Caco-2 (cell line): ENCODE measurements at regions of chr3 and their contacts with region 1.

Region 1: GRCh38 chr3:172039436-172040077 is at the start of gene FNDC3B:
- DNase-seq: peak; percentile 94 to 95
- H3K4me3 ChIP-seq: peak within 1 kb of the TSS; percentile 74
- H3K4me3 Mint-ChIP-seq: peak within 1 kb of the TSS; percentile 95
- H3K27ac Mint-ChIP-seq: peak within 1 kb of the TSS; percentile 96
- H3K4me1 ChIP-seq: peaks cover 28% of the 10 kb centered on the region; the same call in 1 of the 2 replicates
- H3K4me1 Mint-ChIP-seq: peaks cover 8% of the 10 kb centered on the region
- H3K27me3 ChIP-seq: no peaks in the 10 kb centered on the region
- H3K27me3 Mint-ChIP-seq: no peaks in the 10 kb centered on the region
- CTCF ChIP-seq: no peak
- total RNA-seq, gene FNDC3B: 59.8 and 63.5 TPM in 2 replicates

Region 2: DNA sequence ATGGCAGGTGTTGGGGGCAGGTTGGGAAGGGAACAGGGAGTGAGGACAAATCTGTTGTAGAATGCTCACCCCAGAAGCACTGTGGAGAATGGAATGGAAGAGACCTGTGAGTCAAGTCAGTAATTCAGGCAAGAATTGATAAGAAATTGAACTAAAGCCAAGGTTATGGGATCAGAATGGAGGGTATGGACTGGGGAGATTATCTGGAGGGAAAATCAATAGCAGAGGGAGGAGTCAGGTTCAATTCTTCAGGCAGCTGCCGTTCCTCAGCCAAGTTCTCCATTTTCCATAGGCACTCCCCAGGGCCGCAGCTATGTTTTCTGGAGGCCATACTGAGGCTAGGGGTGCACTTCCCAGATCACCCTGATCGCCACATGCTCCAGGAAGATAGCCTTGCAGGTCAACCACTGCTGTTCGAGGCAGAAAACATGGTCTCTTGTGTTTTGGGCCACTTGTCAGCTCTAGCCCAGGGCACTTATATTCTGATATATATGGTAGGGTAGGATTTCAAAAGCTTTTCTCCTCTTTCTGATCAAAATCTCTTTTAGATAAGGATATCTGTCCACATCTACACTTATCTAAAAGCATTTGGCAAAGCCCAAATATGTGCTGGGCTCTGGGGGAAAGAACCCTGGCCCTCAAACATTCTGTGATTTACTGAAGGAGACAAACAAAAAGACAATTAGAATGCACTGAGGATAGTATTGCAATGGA is 104.1 kb before region 1 on chr3:
- CTCF ChIA-PET with region 1: interaction called, 4 read pairs
- POLR2A ChIA-PET with region 1: interaction called, 4 read pairs
- intact Hi-C with region 1: loop called (anchors 1 kb)
- DNase-seq: peak in 1 of 2 experiments; percentile 30
- H3K4me3 ChIP-seq: no peak overlapping the region
- H3K4me3 Mint-ChIP-seq: peak overlapping the region; percentile 18
- H3K27ac Mint-ChIP-seq: no peak overlapping the region
- H3K4me1 ChIP-seq: peaks cover 14% of the 10 kb centered on the region
- H3K4me1 Mint-ChIP-seq: peaks cover 20% of the 10 kb centered on the region
- H3K27me3 ChIP-seq: no peaks in the 10 kb centered on the region
- H3K27me3 Mint-ChIP-seq: no peaks in the 10 kb centered on the region
- CTCF ChIP-seq: no peak

Region 3: DNA sequence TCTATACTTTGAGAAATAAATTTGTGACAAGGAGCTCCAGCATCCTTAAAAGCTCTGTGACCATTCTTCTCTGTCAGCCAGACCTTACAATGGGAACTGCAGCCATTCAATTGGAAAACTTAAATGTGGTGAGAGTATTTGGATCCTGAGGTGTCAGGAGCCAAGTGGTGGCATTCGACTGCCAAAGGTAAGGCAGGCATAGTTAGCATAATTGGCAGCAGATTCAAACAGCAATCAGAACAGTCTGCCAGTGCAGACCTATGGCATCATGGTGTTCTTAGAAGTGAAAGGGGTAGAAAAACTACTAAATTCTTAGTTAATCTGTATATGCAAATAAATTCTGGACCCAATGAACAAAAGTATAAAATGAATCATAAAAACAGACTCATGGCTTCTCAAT is 18.4 kb before region 1 on chr3:
- CTCF ChIA-PET with region 1: no interaction called
- POLR2A ChIA-PET with region 1: no interaction called
- intact Hi-C with region 1: no loop called
- DNase-seq: no peak
- H3K4me3 ChIP-seq: no peak overlapping the region
- H3K4me3 Mint-ChIP-seq: no peak overlapping the region
- H3K27ac Mint-ChIP-seq: no peak overlapping the region
- H3K4me1 ChIP-seq: no peaks in the 10 kb centered on the region
- H3K4me1 Mint-ChIP-seq: no peaks in the 10 kb centered on the region
- H3K27me3 ChIP-seq: no peaks in the 10 kb centered on the region
- H3K27me3 Mint-ChIP-seq: no peaks in the 10 kb centered on the region
- CTCF ChIP-seq: no peak

Region 4: DNA sequence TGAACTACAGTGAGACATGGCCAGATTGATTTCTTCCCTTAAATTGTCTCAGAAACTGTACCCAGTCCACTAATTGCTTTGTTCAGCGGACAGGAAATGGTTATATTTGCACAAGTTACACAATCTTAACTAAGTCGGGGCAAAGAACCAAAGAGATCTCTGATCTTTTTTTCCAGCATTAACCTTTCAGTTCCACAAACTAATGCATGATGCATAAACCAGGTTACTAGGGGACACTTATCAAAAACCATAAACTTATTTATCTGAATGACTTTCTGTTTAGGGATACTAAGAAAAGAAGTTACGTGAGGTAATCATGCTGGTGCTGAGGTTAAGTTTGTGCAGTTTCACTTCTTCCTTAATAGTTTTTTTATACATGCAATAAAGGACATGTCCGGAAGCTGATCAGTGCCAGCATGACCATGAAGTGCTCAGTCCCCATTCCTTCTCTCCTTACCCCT is 22.2 kb after region 1 on chr3:
- CTCF ChIA-PET with region 1: no interaction called
- POLR2A ChIA-PET with region 1: no interaction called
- intact Hi-C with region 1: loop called (anchors 2 kb)
- DNase-seq: no peak
- H3K4me3 ChIP-seq: no peak overlapping the region
- H3K4me3 Mint-ChIP-seq: peak overlapping the region; percentile 58
- H3K27ac Mint-ChIP-seq: no peak overlapping the region
- H3K4me1 ChIP-seq: peaks cover 53% of the 10 kb centered on the region
- H3K4me1 Mint-ChIP-seq: peaks cover 31% of the 10 kb centered on the region
- H3K27me3 ChIP-seq: no peaks in the 10 kb centered on the region
- H3K27me3 Mint-ChIP-seq: no peaks in the 10 kb centered on the region
- CTCF ChIP-seq: no peak

Region 5: GRCh38 chr3:172115787-172116186 is 76.2 kb after region 1 on chr3:
- CTCF ChIA-PET with region 1: no interaction called
- POLR2A ChIA-PET with region 1: no interaction called
- intact Hi-C with region 1: loop called (anchors 5 kb)
- DNase-seq: no peak
- H3K4me3 ChIP-seq: no peak overlapping the region
- H3K4me3 Mint-ChIP-seq: no peak overlapping the region
- H3K27ac Mint-ChIP-seq: no peak overlapping the region
- H3K4me1 ChIP-seq: peaks cover 19% of the 10 kb centered on the region
- H3K4me1 Mint-ChIP-seq: peaks cover 15% of the 10 kb centered on the region
- H3K27me3 ChIP-seq: no peaks in the 10 kb centered on the region
- H3K27me3 Mint-ChIP-seq: no peaks in the 10 kb centered on the region
- CTCF ChIP-seq: no peak

Region 6: DNA sequence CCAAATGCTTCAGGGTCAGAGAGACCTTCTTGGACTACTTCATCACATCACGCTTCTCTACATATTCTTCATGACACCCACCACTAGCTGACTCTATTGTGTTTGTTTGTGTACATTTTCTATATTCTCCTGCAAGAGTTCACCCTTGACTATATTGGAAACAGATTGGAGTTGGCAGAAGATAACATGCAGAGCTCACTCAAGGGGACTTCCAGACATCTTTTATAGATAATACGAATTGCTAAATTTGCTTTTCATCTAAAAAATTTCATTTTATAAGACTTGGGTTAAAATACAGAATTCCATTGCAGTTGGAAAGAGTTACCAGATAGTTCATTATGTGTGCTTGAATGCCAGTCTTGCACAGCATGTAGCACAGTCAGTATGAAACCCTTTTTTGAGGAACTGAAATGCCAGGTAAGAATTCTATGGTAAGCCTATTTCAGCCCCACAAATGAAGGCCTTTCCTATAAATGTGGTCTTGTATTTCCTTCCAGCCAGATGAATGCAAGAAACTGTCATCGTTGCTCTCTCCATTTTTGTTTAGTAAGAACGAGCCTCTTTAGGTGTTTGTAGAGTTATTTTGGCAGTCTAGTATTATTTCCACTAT is 231.1 kb after region 1 on chr3:
- CTCF ChIA-PET with region 1: no interaction called
- POLR2A ChIA-PET with region 1: no interaction called
- intact Hi-C with region 1: loop called (anchors 10 kb)
- DNase-seq: no peak
- H3K4me3 ChIP-seq: no peak overlapping the region
- H3K4me3 Mint-ChIP-seq: no peak overlapping the region
- H3K27ac Mint-ChIP-seq: no peak overlapping the region
- H3K4me1 ChIP-seq: no peaks in the 10 kb centered on the region
- H3K4me1 Mint-ChIP-seq: no peaks in the 10 kb centered on the region
- H3K27me3 ChIP-seq: no peaks in the 10 kb centered on the region
- H3K27me3 Mint-ChIP-seq: no peaks in the 10 kb centered on the region
- CTCF ChIP-seq: no peak

Region 7: DNA sequence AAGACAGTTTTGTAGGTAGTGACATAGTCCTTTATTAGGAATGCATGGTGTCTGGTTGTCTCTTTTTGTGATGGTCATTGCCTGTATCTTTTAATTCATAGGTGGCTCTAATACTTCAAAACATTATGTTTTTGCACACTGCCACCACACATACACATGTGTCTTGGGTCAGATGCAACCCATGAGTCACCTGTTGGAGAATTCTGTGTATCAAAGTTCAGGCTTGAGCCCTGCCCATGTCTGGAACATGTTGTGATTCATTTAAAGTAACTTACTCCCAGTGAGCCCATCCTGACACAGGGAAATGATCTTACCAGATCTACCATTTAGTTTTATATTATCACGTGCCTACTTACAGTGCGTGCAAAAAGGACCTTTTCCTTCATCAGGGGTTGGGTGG is 266.0 kb after region 1 on chr3:
- CTCF ChIA-PET with region 1: no interaction called
- POLR2A ChIA-PET with region 1: no interaction called
- intact Hi-C with region 1: no loop called
- DNase-seq: peak in 1 of 2 experiments; percentile 14
- H3K4me3 ChIP-seq: no peak overlapping the region
- H3K4me3 Mint-ChIP-seq: no peak overlapping the region
- H3K27ac Mint-ChIP-seq: peak overlapping the region; percentile 82
- H3K4me1 ChIP-seq: peaks cover 32% of the 10 kb centered on the region
- H3K4me1 Mint-ChIP-seq: peaks cover 34% of the 10 kb centered on the region
- H3K27me3 ChIP-seq: no peaks in the 10 kb centered on the region
- H3K27me3 Mint-ChIP-seq: no peaks in the 10 kb centered on the region
- CTCF ChIP-seq: no peak